PC-9 (cell line): ENCODE measurements at regions of chr16 and their contacts with region 1.

Region 1: DNA sequence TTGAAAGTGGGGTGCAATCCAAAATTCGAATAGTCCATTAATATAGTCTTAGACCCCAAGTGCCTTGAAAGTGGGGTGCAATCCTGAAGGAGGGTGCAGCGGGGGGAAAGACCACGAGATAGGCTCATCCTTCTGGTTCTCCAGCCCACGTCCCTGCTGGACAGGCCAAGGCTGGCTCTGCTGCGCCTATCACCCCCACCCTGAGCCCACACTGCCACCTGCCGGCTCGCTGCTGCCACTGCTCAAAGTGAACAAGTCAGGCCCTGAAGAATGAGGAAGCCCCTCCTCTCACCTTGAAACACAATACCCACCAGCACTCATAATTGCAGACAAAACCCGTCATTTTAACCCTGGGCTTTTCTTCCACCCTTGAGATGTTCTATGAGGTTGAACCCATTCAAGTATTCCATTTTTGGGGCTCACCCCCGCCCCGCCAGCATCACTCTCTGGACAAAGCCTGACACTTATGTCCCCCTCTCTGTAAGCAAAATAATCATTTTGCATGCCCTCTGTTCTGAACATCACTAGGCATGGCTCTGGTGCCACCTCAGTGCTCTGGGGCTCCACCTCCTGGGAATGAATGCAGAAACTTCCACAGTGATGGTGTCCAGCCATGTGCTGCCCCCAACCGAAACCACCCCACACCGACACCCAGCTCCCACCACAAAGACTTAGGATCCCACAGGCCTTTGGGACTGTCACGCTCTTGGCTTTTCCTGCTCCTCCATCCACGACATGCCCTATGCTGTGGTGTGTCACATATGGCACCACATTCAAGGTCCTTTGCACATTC is 56.8 kb downstream of the BEAN1 start:
- DNase-seq: peak; percentile 74 to 82
- H3K4me3 ChIP-seq: no peak overlapping the region
- H3K27ac ChIP-seq: no peak overlapping the region
- H3K4me1 ChIP-seq: peaks cover 56% of the 10 kb centered on the region
- H3K27me3 ChIP-seq: no peaks in the 10 kb centered on the region
- CTCF ChIP-seq: peak; percentile 93

Region 2: DNA sequence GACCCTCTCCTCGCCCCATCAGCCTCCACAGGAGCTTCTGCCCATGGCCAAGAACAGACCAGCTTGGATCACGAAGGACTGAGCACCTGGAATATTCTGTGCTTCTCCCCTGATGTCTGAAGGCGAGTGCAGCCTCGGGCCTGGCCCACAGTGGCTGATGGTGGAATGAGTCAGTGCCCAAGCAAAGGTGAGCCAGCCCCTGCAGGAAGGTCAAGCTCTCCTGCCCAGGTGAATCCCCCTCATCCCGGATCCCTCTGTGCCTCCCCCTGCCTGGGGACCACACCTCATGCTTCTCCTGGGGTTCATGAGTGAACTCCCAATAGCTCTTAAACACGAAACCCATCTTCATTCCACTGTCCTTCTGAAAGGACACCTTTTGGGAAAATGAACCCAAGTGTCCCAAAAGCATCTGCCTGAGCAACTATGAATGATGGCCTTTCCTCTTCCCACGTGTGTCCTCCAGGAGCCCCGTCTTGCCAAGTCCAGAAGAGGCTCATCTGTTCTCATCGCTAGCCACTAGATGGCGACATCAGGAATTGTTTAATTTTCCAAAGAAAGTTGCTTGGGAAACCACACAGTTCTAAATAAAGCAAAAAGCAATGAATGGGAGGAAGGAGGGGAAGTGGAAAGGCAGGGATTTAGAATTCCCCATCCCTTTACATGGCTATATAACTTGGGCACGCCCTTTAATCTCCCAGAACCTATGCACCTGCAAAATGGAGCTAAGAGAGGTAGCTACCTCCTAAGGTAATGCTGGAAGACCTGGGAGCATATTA is 126.5 kb before region 1 on chr16:
- CTCF ChIA-PET with region 1: no interaction called
- POLR2A ChIA-PET with region 1: no interaction called
- intact Hi-C with region 1: loop called (anchors 1 kb)
- DNase-seq: peak; percentile 59 to 68
- H3K4me3 ChIP-seq: no peak overlapping the region
- H3K27ac ChIP-seq: no peak overlapping the region
- H3K4me1 ChIP-seq: peaks cover 36% of the 10 kb centered on the region
- H3K27me3 ChIP-seq: no peaks in the 10 kb centered on the region
- CTCF ChIP-seq: peak; percentile 85

Region 3: DNA sequence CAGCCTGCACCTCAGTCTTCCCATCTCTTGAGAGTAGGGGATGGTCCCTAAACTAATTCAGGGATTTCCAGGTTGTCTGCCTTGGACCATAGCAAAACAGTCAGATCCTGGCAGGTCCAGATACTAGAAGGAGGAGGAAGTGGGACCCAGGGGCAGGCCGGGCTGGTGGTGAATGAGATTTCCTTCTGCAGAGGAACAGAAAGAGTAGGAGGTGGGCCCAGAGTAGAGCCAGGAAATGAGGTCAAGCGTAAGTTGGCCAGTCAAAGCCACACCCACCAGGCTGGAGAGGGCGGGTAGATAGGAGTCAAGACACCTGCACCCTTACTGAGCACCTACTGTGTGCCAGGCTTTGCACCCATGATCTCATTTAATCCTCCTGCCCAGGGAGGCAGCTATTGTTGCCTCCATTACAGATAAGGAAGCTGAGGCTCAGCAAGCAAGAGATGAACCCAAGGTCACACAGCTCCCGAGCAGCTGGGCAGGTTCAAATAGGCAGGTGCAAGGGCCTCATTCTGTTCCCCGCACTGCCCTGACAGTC is 114.8 kb before region 1 on chr16:
- CTCF ChIA-PET with region 1: no interaction called
- POLR2A ChIA-PET with region 1: no interaction called
- intact Hi-C with region 1: no loop called
- DNase-seq: no peak
- H3K4me3 ChIP-seq: no peak overlapping the region
- H3K27ac ChIP-seq: no peak overlapping the region
- H3K4me1 ChIP-seq: peaks cover 68% of the 10 kb centered on the region
- H3K27me3 ChIP-seq: no peaks in the 10 kb centered on the region
- CTCF ChIP-seq: no peak

Region 4: GRCh38 chr16:66406534-66407221 is 77.2 kb before region 1 on chr16:
- CTCF ChIA-PET with region 1: interaction called, 9 read pairs
- POLR2A ChIA-PET with region 1: no interaction called
- intact Hi-C with region 1: loop called (anchors 1 kb)
- DNase-seq: peak; percentile 64 to 79
- H3K4me3 ChIP-seq: peak overlapping the region; percentile 63; the same call in 1 of the 2 replicates
- H3K27ac ChIP-seq: no peak overlapping the region
- H3K4me1 ChIP-seq: peaks cover 36% of the 10 kb centered on the region
- H3K27me3 ChIP-seq: no peaks in the 10 kb centered on the region
- CTCF ChIP-seq: peak; percentile 95

Region 5: GRCh38 chr16:66427036-66427860 is 56.6 kb before region 1 on chr16 and contains the start of gene BEAN1:
- CTCF ChIA-PET with region 1: no interaction called
- POLR2A ChIA-PET with region 1: no interaction called
- intact Hi-C with region 1: no loop called
- DNase-seq: peak in 1 of 2 experiments; percentile 29
- H3K4me3 ChIP-seq: peak within 1 kb of the TSS; percentile 45; the same call in 1 of the 2 replicates
- H3K27ac ChIP-seq: no peak within 1 kb of the TSS
- H3K4me1 ChIP-seq: no peaks in the 10 kb centered on the region
- H3K27me3 ChIP-seq: 0 out of 2 replicates have a peak, but pooled peaks cover 3% of the 10 kb centered on the region
- CTCF ChIP-seq: no peak
- total RNA-seq, gene BEAN1: 0.37 and 0.48 TPM in 2 replicates

Region 6: DNA sequence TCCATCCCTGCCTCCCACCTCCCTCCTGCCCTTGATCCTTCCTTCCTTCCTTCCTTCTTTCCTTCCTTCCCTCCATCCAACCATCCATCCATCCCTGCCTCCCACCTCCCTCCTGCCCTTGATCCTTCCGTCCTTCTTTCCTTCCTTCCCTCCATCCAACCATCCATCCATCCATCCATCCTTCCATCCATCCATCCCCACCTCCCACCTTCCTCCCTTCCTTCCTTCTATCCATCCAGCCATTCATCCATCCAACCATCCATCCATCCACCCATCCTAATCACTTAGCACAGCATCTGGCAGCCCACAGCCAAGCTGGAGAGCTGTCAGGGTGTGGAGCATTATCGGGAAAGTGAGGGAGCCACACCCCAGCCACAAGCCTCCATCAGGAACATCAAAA is 11.6 kb after region 1 on chr16:
- CTCF ChIA-PET with region 1: no interaction called
- POLR2A ChIA-PET with region 1: no interaction called
- intact Hi-C with region 1: no loop called
- DNase-seq: peak in 1 of 2 experiments; percentile 9
- H3K4me3 ChIP-seq: no peak overlapping the region
- H3K27ac ChIP-seq: no peak overlapping the region
- H3K4me1 ChIP-seq: no peaks in the 10 kb centered on the region
- H3K27me3 ChIP-seq: no peaks in the 10 kb centered on the region
- CTCF ChIP-seq: no peak

Region 7: GRCh38 chr16:66552286-66553177 is 68.6 kb after region 1 on chr16 and contains the start of gene CKLF:
- CTCF ChIA-PET with region 1: interaction called, 3 read pairs
- POLR2A ChIA-PET with region 1: interaction called, 5 read pairs
- intact Hi-C with region 1: loop called (anchors 2 kb)
- DNase-seq: peak; percentile 75 to 91
- H3K4me3 ChIP-seq: peak within 1 kb of the TSS; percentile 66
- H3K27ac ChIP-seq: no peak within 1 kb of the TSS
- H3K4me1 ChIP-seq: peaks cover 30% of the 10 kb centered on the region
- H3K27me3 ChIP-seq: no peaks in the 10 kb centered on the region
- CTCF ChIP-seq: no peak
- total RNA-seq, gene CKLF: 77.1 and 86.4 TPM in 2 replicates

Region 8: GRCh38 chr16:66650707-66651473 is 167.0 kb after region 1 on chr16:
- CTCF ChIA-PET with region 1: no interaction called
- POLR2A ChIA-PET with region 1: no interaction called
- intact Hi-C with region 1: no loop called
- DNase-seq: peak in 1 of 2 experiments; percentile 37
- H3K4me3 ChIP-seq: no peak overlapping the region
- H3K27ac ChIP-seq: no peak overlapping the region
- H3K4me1 ChIP-seq: 0 out of 2 replicates have a peak, but pooled peaks cover 4% of the 10 kb centered on the region
- H3K27me3 ChIP-seq: no peaks in the 10 kb centered on the region
- CTCF ChIP-seq: peak; percentile 85